CD8-positive, alpha-beta T cell (primary cell): ENCODE measurements at regions of chr5 and their contacts with region 1.

Region 1: DNA sequence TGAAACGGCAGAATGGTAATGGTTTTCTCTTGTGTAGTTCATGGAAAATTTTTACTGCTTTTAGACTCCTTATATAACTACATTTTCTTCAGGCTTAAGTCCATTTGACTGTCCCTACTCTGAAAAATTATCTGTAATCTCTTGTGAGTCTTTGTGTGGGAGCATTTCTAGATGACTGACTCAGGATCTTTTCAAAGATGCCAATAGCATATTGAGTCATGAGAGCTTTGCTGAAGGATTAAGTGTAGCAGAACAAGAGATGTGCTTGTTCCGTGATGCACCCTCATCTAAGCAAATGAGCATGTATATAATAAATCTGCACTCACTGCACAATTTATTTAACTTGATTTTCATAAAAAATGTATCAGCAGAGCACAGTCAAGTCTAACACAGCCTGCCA is 298.7 kb upstream of the CDH6 start:
- DNase-seq: no peak
- ATAC-seq: no peak
- H3K4me3 ChIP-seq: no peak overlapping the region
- H3K4me3 Mint-ChIP-seq: no peak overlapping the region
- H3K27ac ChIP-seq: no peak overlapping the region
- H3K27ac Mint-ChIP-seq: no peak overlapping the region
- H3K4me1 ChIP-seq: no peaks in the 10 kb centered on the region
- H3K4me1 Mint-ChIP-seq: no peaks in the 10 kb centered on the region
- H3K27me3 ChIP-seq: no peaks in the 10 kb centered on the region
- H3K27me3 Mint-ChIP-seq: no peaks in the 10 kb centered on the region
- CTCF ChIP-seq: no peak

Region 2: GRCh38 chr5:30765227-30765626 is 129.6 kb before region 1 on chr5:
- CTCF ChIA-PET with region 1: no interaction called
- POLR2A ChIA-PET with region 1: no interaction called
- intact Hi-C with region 1: no loop called
- DNase-seq: no peak
- ATAC-seq: no peak
- H3K4me3 ChIP-seq: no peak overlapping the region
- H3K4me3 Mint-ChIP-seq: no peak overlapping the region
- H3K27ac ChIP-seq: no peak overlapping the region
- H3K27ac Mint-ChIP-seq: no peak overlapping the region
- H3K4me1 ChIP-seq: no peaks in the 10 kb centered on the region
- H3K4me1 Mint-ChIP-seq: no peaks in the 10 kb centered on the region
- H3K27me3 ChIP-seq: no peaks in the 10 kb centered on the region
- H3K27me3 Mint-ChIP-seq: no peaks in the 10 kb centered on the region
- CTCF ChIP-seq: no peak

Region 3: DNA sequence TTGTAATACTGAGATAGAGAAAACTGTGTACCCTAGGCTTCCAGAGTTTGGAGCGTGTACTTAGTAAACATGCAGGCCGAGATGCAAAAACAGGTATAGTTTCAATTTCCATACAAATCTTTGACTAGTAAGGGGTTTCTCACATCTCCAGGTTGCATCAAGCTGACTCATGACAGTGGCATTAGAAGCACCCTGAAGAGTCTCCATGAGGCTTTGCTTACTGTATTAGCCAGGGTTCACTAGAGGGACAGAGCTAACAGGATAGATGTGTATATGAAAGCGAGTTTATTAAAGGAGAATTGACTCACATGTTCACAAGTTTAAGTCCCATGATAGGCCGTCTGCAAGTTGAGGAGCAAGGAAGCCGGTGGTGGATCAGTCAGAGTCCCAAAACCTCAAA is 23.4 kb after region 1 on chr5:
- CTCF ChIA-PET with region 1: no interaction called
- POLR2A ChIA-PET with region 1: no interaction called
- intact Hi-C with region 1: loop called in 1 of 2 experiments (anchors 1 kb)
- DNase-seq: no peak
- ATAC-seq: no peak
- H3K4me3 ChIP-seq: no peak overlapping the region
- H3K4me3 Mint-ChIP-seq: no peak overlapping the region
- H3K27ac ChIP-seq: no peak overlapping the region
- H3K27ac Mint-ChIP-seq: no peak overlapping the region
- H3K4me1 ChIP-seq: no peaks in the 10 kb centered on the region
- H3K4me1 Mint-ChIP-seq: no peaks in the 10 kb centered on the region
- H3K27me3 ChIP-seq: no peaks in the 10 kb centered on the region
- H3K27me3 Mint-ChIP-seq: no peaks in the 10 kb centered on the region
- CTCF ChIP-seq: no peak